Calu3 (cell line): ENCODE measurements at regions of chr17 and their contacts with region 1.

Region 1: GRCh38 chr17:43994272-43995149 is 9.9 kb upstream of the NAGS start:
- DNase-seq: peak; percentile 81
- H3K4me3 Mint-ChIP-seq: peak overlapping the region; percentile 24
- H3K27ac Mint-ChIP-seq: no peak overlapping the region
- H3K4me1 Mint-ChIP-seq: no peaks in the 10 kb centered on the region
- H3K27me3 Mint-ChIP-seq: peaks cover 18% of the 10 kb centered on the region
- CTCF ChIP-seq: peak; percentile 98

Region 2: DNA sequence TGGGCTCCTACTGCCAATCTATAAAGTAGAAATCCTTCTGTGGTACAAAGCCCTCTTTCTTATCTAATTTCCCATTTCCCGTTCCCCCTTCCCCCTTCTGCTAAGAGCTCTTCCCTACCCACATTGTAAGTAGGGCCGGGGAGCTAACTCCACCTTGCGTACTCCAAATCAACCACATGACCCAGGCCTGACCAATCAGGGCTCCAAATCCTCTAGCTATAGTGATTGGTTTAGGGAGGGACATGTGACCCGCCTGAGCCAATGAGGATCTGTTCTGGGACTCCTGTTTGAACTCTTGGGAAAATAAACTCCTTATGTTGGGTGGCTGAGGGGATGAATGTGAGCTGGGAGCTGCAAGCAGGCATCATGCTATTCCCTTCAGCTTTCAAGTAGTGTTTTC is 291.9 kb before region 1 on chr17:
- CTCF ChIA-PET with region 1: no interaction called
- intact Hi-C with region 1: no loop called
- DNase-seq: peak; percentile 24
- H3K4me3 Mint-ChIP-seq: no peak overlapping the region
- H3K27ac Mint-ChIP-seq: no peak overlapping the region
- H3K4me1 Mint-ChIP-seq: no peaks in the 10 kb centered on the region
- H3K27me3 Mint-ChIP-seq: peaks cover 57% of the 10 kb centered on the region
- CTCF ChIP-seq: no peak

Region 3: DNA sequence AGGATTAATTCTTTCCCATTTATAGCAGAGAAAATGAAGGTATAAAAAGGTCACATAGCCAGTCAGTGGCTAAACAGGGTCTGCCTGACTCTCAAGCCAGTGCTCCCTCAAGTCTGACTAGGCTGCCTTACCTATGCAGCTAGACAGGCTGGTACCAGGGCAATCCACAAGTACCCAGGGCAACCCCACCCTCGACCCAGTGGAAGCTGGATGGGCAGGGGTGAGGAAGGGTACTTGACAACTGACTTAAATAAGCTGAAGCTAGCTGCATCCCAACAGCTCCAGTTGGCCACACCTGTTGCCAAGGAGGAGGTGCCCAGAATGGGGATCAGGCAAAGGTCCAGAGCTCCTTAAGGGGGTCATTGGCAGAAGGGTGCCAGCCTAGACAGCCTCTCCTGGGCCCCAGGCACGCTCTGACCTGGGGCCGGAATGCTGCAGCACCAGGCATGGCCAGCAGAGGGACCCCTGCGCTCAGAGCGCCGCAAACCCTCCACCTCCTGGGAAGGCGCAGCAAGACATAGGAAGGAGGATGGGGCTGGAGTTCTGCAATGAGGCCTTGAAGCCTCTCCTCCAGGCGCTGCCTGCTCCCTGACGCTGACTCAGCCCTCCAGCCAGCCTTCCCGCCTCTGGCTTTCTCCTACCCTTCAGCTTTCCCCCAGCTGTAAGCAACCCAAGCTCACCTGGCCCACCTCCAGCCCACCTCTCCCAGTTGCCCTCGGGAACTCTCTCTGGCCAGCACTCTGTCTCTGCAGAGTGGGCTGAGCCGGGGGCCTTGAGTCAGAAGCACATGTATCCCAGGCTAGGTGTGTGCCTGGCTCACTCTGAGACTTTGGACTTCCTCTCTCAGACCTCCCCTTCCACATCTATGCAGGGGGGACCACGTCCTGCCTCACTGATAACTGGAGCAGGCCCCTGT is 116.0 kb before region 1 on chr17:
- CTCF ChIA-PET with region 1: interaction called, 5 read pairs
- intact Hi-C with region 1: loop called (anchors 10 kb)
- DNase-seq: peak; percentile 93
- H3K4me3 Mint-ChIP-seq: no peak overlapping the region
- H3K27ac Mint-ChIP-seq: no peak overlapping the region
- H3K4me1 Mint-ChIP-seq: peaks cover 8% of the 10 kb centered on the region
- H3K27me3 Mint-ChIP-seq: peaks cover 43% of the 10 kb centered on the region
- CTCF ChIP-seq: peak; percentile 98

Region 4: GRCh38 chr17:43900183-43900857 is 94.2 kb before region 1 on chr17:
- CTCF ChIA-PET with region 1: no interaction called
- intact Hi-C with region 1: no loop called
- DNase-seq: peak; percentile 95
- H3K4me3 Mint-ChIP-seq: peak overlapping the region; percentile 75
- H3K27ac Mint-ChIP-seq: peak overlapping the region; percentile 51
- H3K4me1 Mint-ChIP-seq: peaks cover 19% of the 10 kb centered on the region
- H3K27me3 Mint-ChIP-seq: peaks cover 77% of the 10 kb centered on the region
- CTCF ChIP-seq: no peak

Region 5: GRCh38 chr17:44235583-44235936 is 241.0 kb after region 1 on chr17:
- CTCF ChIA-PET with region 1: interaction called, 12 read pairs
- intact Hi-C with region 1: no loop called
- DNase-seq: no peak
- H3K4me3 Mint-ChIP-seq: peak overlapping the region; percentile 7
- H3K27ac Mint-ChIP-seq: peak overlapping the region; percentile 78
- H3K4me1 Mint-ChIP-seq: peaks cover 38% of the 10 kb centered on the region
- H3K27me3 Mint-ChIP-seq: peaks cover 13% of the 10 kb centered on the region
- CTCF ChIP-seq: no peak